Lower leg skin (tissue), 4 donors: ENCODE measurements at regions of chr6 and their contacts with region 1.

Region 1: GRCh38 chr6:167141667-167142432 is 15.9 kb downstream of the GPR31 start:
- DNase-seq: no peak
- H3K4me3 ChIP-seq: no peak overlapping the region
- CTCF ChIP-seq: no peak
- POLR2A ChIP-seq: no peak

Region 2: GRCh38 chr6:166786704-166787293 is 355.1 kb before region 1 on chr6:
- intact Hi-C with region 1: loop called (anchors 10 kb)
- DNase-seq: no peak
- H3K4me3 ChIP-seq: no peak overlapping the region
- CTCF ChIP-seq: no peak
- POLR2A ChIP-seq: no peak